GM10248 (cell line): ENCODE measurements at regions of chr7 and their contacts with region 1.

Region 1: GRCh38 chr7:50266635-50267386 is 37.7 kb upstream of the IKZF1 start:
- DNase-seq: peak; percentile 59
- CTCF ChIP-seq: no peak

Region 2: GRCh38 chr7:49707891-49708290 is 558.9 kb before region 1 on chr7:
- CTCF ChIA-PET with region 1: no interaction called
- POLR2A ChIA-PET with region 1: no interaction called
- DNase-seq: no peak
- CTCF ChIP-seq: no peak

Region 3: GRCh38 chr7:50037086-50037485 is 229.7 kb before region 1 on chr7:
- CTCF ChIA-PET with region 1: no interaction called
- POLR2A ChIA-PET with region 1: no interaction called
- DNase-seq: no peak
- CTCF ChIP-seq: no peak

Region 4: DNA sequence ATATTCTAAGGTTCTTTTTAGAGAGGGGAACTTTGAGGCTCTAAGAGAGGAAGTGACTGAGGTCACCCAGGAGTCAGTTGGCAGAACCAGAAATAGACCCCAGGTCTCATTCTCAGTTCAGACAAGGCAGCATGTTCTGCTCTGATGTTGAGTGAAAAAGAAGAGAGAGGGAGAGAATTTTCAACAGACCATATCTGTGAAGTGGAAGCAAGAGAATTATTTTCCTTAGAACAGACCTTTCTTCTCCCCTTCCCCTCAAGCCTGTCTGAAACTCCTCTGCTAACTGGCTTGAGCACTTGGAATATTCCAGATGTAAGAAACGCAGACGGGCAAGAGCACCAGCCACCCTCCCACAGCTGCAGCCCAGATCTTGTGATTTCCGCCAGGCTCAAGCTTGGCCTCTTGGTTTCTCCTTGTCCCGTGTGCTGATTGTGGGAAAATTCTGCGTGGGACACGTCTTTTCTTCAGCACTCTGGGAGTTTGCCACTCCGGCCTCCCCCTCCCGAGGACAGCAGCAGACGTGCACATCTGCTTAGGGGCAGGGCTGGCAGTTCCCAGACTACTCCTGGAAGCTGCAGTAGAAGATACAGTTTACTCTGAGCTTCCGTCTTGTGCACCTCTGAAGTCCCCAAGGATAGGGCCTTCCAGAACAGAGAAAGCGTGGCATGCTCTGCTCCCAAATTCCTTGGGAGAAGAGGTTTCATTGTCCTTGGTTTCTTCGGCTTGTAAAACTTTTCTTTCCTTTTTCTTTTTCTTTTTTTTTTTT is 15.1 kb after region 1 on chr7:
- CTCF ChIA-PET with region 1: interaction called, 21 read pairs
- POLR2A ChIA-PET with region 1: interaction called, 5 read pairs
- DNase-seq: peak; percentile 62
- CTCF ChIP-seq: no peak

Region 5: DNA sequence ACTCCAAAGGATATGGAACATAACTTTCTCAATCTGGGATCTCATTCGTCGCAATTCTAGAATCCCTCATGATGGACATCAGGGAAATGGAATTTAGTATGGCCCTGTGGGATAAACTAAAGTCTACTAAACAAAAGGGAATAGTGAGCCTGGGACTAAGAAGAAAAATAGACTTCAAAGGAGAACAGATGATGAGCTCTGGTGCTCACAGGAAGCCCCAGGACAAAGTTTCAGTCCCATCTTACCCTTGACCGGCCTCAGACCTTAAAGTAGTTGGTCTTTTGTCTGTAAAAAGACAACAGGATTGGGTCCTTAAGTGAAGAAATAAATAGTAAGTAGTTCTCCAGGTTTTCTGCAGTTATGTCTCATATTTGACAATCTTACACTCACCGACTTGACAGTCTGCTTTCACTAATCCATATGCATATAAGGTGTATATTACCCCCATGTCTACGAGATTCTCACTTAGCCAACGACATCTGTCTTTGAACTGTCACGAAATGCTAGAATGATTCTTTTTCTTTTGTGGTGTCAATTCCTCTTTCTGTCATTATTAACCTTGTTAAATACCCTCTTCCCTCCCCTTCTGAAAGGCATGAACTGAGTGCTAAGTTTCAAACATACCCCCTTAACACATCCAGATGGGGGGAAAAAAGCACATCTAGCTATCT is 26.8 kb after region 1 on chr7:
- CTCF ChIA-PET with region 1: interaction called, 46 read pairs
- POLR2A ChIA-PET with region 1: no interaction called
- DNase-seq: no peak
- CTCF ChIP-seq: no peak